CD4-positive, alpha-beta T cell (primary cell): ENCODE measurements at regions of chr19 and their contacts with region 1.

Region 1: GRCh38 chr19:35931161-35931873 is 4.9 kb upstream of the LRFN3 start:
- DNase-seq: peak; percentile 97 to 100 (median 99)
- ATAC-seq: peak; percentile 95
- H3K4me3 ChIP-seq: peak overlapping the region; percentile 42
- H3K4me3 Mint-ChIP-seq: peak overlapping the region; percentile 83
- H3K27ac ChIP-seq: peak overlapping the region; percentile 59 to 78
- H3K27ac Mint-ChIP-seq: peak overlapping the region; percentile 90
- H3K4me1 ChIP-seq: peaks cover 49% of the 10 kb centered on the region
- H3K4me1 Mint-ChIP-seq: peaks cover 36% of the 10 kb centered on the region
- H3K27me3 ChIP-seq: no peaks in the 10 kb centered on the region
- H3K27me3 Mint-ChIP-seq: no peaks in the 10 kb centered on the region
- CTCF ChIP-seq: peak; percentile 84

Region 2: DNA sequence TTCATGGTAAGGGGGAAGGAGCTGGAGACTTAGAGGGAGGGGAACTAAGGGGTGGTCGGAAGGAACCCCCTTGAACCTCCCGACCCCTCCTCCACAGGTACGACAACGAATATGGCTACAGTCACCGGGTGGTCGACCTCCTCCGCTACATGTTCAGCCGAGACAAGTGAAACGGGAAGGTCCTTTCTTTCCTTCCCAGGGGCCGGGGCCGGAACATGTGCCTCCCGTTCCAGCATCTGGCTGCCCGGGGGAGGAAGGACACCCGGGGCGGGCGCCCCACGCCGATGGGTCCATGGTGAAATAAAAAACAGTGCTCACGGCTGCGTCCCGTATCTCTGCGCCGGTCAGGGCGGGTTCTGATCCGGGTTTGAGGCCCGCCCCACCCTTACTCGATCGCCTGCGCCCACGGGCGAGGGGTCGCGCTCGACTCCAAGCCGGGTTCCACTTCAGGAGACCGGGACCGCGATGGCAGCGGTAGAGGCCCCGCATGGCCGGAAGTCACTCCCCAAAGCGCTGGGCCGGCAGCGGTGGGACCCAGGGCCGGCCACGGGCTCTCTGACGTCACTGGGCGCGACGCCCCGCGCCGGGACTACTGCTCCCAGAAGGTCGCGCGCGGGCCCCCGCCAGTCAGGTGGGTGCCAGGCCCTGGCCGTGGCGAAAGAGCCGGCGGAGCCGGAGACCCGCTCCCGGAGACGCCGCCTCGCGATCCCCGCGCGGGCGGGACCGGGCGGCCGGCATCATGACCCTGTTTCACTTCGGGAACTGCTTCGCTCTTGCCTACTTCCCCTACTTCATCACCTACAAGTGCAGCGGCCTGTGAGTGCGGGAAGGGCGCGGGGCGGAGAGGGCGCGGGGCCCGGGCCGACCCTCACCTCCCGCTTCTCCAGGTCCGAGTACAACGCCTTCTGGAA is 386.1 kb before region 1 on chr19 and contains the start of gene TMEM147:
- CTCF ChIA-PET with region 1: no interaction called
- POLR2A ChIA-PET with region 1: no interaction called
- intact Hi-C with region 1: loop called in 1 of 2 experiments (anchors 2 kb)
- DNase-seq: peak; percentile 45 to 86 (median 73)
- ATAC-seq: peak; percentile 85
- H3K4me3 ChIP-seq: peak within 1 kb of the TSS; percentile 93
- H3K4me3 Mint-ChIP-seq: peak within 1 kb of the TSS; percentile 94
- H3K27ac ChIP-seq: peak within 1 kb of the TSS; percentile 64 to 90
- H3K27ac Mint-ChIP-seq: peak within 1 kb of the TSS; percentile 93
- H3K4me1 ChIP-seq: peaks cover 40% of the 10 kb centered on the region
- H3K4me1 Mint-ChIP-seq: peaks cover 36% of the 10 kb centered on the region
- H3K27me3 ChIP-seq: no peaks in the 10 kb centered on the region
- H3K27me3 Mint-ChIP-seq: no peaks in the 10 kb centered on the region
- CTCF ChIP-seq: no peak
- total RNA-seq, gene TMEM147: 20.3 to 22.0 TPM

Region 3: DNA sequence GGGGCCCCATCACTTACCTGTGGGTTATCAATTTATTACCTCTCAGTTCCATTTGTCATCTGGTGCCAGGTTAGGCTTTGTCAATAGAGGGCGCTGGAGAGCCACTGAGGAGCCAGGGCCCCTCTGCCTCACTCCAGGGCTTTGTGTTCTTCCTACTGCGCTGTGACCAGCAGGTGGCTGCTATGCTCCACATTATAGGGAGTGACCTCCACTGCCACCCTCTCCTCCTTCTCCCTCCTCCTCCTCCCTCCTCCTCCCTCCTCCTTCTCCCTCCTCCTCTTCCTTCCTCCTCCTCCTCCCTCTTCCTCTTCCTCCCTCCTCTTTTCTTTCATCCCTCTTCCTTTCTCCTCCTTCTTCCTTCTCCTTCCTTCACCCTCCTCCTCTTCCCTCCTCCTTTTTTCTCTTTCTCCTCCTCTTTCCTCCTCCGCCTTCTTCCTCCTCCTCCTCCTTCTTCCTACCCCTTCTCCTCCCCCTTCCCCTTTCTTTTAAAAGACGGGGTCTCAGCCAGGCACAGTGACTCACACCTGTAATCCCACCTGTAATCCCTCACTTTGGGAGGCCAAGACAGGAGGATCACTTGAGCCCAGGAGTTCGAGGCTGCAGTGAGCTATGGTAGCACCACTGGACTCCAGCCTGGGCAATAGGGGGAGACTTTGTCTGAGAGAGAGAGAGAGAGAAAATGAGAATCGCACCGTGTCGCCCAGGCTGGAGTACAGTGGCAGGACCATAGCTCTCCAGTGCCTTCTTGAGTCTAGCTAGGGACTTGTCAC is 237.3 kb before region 1 on chr19:
- CTCF ChIA-PET with region 1: no interaction called
- POLR2A ChIA-PET with region 1: no interaction called
- intact Hi-C with region 1: loop called (anchors 1 kb)
- DNase-seq: peak; percentile 85 to 94 (median 89)
- ATAC-seq: peak; percentile 100
- H3K4me3 ChIP-seq: no peak overlapping the region
- H3K4me3 Mint-ChIP-seq: no peak overlapping the region
- H3K27ac ChIP-seq: no peak overlapping the region
- H3K27ac Mint-ChIP-seq: no peak overlapping the region
- H3K4me1 ChIP-seq: peaks cover 5% of the 10 kb centered on the region
- H3K4me1 Mint-ChIP-seq: no peaks in the 10 kb centered on the region
- H3K27me3 ChIP-seq: no peaks in the 10 kb centered on the region
- H3K27me3 Mint-ChIP-seq: no peaks in the 10 kb centered on the region
- CTCF ChIP-seq: peak; percentile 97

Region 4: GRCh38 chr19:35748106-35749020 is 183.0 kb before region 1 on chr19 and contains the start of gene LIN37:
- CTCF ChIA-PET with region 1: interaction called, 3 read pairs
- POLR2A ChIA-PET with region 1: interaction called, 6 read pairs
- intact Hi-C with region 1: loop called (anchors 1 kb)
- DNase-seq: peak; percentile 95 to 100 (median 98)
- ATAC-seq: peak; percentile 70
- H3K4me3 ChIP-seq: peak within 1 kb of the TSS; percentile 94
- H3K4me3 Mint-ChIP-seq: peak within 1 kb of the TSS; percentile 98
- H3K27ac ChIP-seq: peak within 1 kb of the TSS; percentile 61 to 75
- H3K27ac Mint-ChIP-seq: peak within 1 kb of the TSS; percentile 89
- H3K4me1 ChIP-seq: peaks cover 49% of the 10 kb centered on the region
- H3K4me1 Mint-ChIP-seq: peaks cover 37% of the 10 kb centered on the region
- H3K27me3 ChIP-seq: no peaks in the 10 kb centered on the region
- H3K27me3 Mint-ChIP-seq: no peaks in the 10 kb centered on the region
- CTCF ChIP-seq: no peak
- total RNA-seq, gene LIN37: 4.8 to 6.0 TPM

Region 5: DNA sequence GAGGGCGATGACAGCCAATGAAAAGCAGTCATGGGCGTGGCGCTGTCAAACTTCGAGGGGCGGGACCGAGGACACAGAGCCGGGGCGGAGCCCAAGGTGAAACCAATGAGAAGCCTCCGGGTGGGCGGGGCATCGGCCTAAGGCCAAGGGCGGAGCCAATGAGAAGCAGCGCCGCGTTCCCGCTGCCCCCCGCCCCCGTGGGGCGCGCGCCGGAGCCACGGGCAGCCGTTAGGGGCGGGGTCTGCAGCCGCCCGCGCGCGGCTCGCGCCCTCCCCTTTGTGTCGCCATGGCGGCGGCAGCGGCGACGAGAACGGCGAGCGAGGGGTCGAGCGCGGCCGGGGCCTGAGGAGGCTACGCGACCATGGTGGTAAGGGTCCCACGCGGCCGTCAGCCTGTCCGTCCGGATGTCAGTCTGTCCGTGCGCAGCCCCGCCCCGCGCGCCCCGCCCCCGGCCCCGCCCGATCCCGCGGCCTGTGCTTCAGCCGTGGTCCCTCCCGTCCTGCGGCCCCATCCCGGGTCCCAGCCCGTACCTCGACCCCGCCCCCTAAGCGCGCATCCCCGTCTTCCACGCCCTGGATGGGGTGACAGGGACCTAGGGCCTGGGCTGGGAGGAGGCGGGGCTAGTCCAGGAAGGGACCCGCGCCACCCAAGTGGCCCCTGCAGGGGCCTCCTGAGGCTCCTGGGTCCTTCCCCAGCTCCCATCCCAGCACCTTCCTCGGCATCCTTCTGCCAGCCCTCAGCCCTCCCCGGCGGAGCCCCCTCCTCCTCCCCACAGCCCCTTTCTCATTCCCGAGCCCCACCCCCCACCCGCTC is 155.8 kb before region 1 on chr19 and contains the start of gene ARHGAP33:
- CTCF ChIA-PET with region 1: no interaction called
- POLR2A ChIA-PET with region 1: no interaction called
- intact Hi-C with region 1: loop called in 1 of 2 experiments (anchors 10 kb)
- DNase-seq: peak; percentile 96 to 100 (median 98)
- ATAC-seq: peak; percentile 98
- H3K4me3 ChIP-seq: peak within 1 kb of the TSS; percentile 69
- H3K4me3 Mint-ChIP-seq: peak within 1 kb of the TSS; percentile 90
- H3K27ac ChIP-seq: no peak within 1 kb of the TSS
- H3K27ac Mint-ChIP-seq: no peak within 1 kb of the TSS
- H3K4me1 ChIP-seq: peaks cover 21% of the 10 kb centered on the region
- H3K4me1 Mint-ChIP-seq: peaks cover 24% of the 10 kb centered on the region
- H3K27me3 ChIP-seq: no peaks in the 10 kb centered on the region
- H3K27me3 Mint-ChIP-seq: no peaks in the 10 kb centered on the region
- CTCF ChIP-seq: no peak
- total RNA-seq, gene ARHGAP33: 16.4 to 19.5 TPM

Region 6: GRCh38 chr19:35882114-35882832 is 49.0 kb before region 1 on chr19:
- CTCF ChIA-PET with region 1: interaction called, 44 read pairs
- POLR2A ChIA-PET with region 1: interaction called, 33 read pairs
- intact Hi-C with region 1: loop called (anchors 1 kb)
- DNase-seq: peak in 6 of 14 experiments; percentile 27 to 87 (median 72)
- ATAC-seq: peak; percentile 87
- H3K4me3 ChIP-seq: no peak overlapping the region
- H3K4me3 Mint-ChIP-seq: no peak overlapping the region
- H3K27ac ChIP-seq: no peak overlapping the region
- H3K27ac Mint-ChIP-seq: no peak overlapping the region
- H3K4me1 ChIP-seq: peaks cover 12% of the 10 kb centered on the region
- H3K4me1 Mint-ChIP-seq: peaks cover 14% of the 10 kb centered on the region
- H3K27me3 ChIP-seq: peaks cover 15 to 18% of the 10 kb centered on the region in 2 experiments
- H3K27me3 Mint-ChIP-seq: peaks cover 32% of the 10 kb centered on the region
- CTCF ChIP-seq: peak; percentile 77

Region 7: DNA sequence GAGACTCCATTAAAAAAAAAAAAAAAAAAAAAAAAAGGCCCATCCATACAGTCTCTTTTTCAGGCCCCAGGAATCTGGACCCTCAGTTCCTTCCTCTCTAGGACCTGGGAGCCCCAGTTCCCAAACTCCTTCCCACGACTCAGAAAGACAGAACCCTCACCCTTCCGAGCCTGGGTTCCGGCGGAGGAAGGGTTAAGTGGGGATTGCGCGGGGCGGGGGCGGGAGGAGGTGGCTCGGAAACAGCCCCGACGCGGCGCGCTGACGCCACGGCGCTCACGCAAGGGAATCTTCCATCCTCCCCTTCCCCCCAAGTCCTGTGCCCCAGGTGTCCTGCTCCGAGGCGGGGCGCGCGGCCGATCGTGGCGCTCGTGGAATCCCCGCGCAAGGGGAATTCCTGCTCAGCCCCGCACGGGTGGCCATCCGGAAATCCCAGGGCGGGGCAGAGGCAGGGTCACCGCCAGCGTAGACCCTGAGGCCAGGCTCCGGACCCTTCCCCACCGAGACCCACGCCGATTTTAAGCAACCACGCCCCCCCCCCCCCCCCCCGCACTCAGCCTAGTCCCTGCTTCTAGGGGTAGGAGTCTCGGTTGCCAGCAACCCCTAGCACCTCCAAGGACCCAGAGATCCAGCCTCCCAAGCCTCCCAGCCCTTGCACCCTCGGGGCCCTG is 31.6 kb before region 1 on chr19:
- CTCF ChIA-PET with region 1: interaction called, 5 read pairs
- POLR2A ChIA-PET with region 1: interaction called, 24 read pairs
- intact Hi-C with region 1: loop called (anchors 1 kb)
- DNase-seq: peak; percentile 68 to 97 (median 83)
- ATAC-seq: peak; percentile 54
- H3K4me3 ChIP-seq: peak overlapping the region; percentile 99
- H3K4me3 Mint-ChIP-seq: peak overlapping the region; percentile 98
- H3K27ac ChIP-seq: peak overlapping the region; percentile 100
- H3K27ac Mint-ChIP-seq: peak overlapping the region; percentile 92
- H3K4me1 ChIP-seq: peaks cover 77% of the 10 kb centered on the region
- H3K4me1 Mint-ChIP-seq: peaks cover 60% of the 10 kb centered on the region
- H3K27me3 ChIP-seq: no peaks in the 10 kb centered on the region
- H3K27me3 Mint-ChIP-seq: no peaks in the 10 kb centered on the region
- CTCF ChIP-seq: no peak

Region 8: DNA sequence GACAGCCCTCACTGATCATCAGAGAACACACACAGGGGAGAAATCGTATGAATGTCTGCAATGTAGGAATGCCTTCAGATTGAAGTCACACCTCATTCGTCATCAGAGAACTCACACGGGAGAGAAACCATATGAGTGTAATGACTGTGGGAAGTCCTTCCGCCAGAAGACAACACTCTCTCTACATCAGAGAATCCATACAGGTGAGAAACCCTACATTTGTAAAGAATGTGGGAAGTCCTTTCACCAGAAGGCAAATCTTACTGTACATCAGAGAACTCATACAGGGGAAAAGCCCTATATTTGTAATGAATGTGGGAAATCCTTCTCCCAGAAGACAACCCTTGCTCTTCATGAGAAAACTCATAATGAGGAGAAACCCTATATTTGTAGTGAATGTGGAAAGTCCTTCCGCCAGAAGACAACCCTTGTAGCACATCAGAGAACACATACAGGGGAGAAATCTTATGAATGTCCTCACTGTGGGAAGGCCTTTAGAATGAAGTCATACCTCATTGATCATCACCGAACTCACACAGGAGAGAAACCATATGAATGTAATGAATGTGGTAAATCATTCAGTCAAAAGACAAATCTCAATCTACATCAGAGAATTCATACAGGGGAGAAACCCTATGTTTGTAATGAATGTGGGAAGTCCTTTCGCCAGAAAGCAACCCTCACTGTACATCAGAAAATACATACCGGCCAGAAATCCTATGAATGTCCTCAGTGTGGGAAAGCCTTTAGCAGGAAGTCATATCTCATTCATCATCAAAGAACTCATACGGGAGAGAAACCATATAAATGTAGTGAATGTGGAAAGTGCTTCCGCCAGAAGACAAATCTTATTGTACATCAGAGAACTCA is 788.6 kb after region 1 on chr19:
- CTCF ChIA-PET with region 1: no interaction called
- POLR2A ChIA-PET with region 1: no interaction called
- intact Hi-C with region 1: no loop called
- DNase-seq: no peak
- ATAC-seq: no peak
- H3K4me3 ChIP-seq: no peak overlapping the region
- H3K4me3 Mint-ChIP-seq: no peak overlapping the region
- H3K27ac ChIP-seq: no peak overlapping the region
- H3K27ac Mint-ChIP-seq: no peak overlapping the region
- H3K4me1 ChIP-seq: no peaks in the 10 kb centered on the region
- H3K4me1 Mint-ChIP-seq: no peaks in the 10 kb centered on the region
- H3K27me3 ChIP-seq: no peaks in the 10 kb centered on the region
- H3K27me3 Mint-ChIP-seq: no peaks in the 10 kb centered on the region
- CTCF ChIP-seq: no peak